AG04450 (cell line): ENCODE measurements at regions of chr16 and their contacts with region 1.

Region 1: GRCh38 chr16:14347706-14348105 is 276.6 kb downstream of the MRTFB start:
- DNase-seq: no peak
- H3K4me3 ChIP-seq: no peak overlapping the region
- H3K27ac ChIP-seq: no peak overlapping the region
- H3K27me3 ChIP-seq: no peaks in the 10 kb centered on the region
- CTCF ChIP-seq: no peak

Region 2: DNA sequence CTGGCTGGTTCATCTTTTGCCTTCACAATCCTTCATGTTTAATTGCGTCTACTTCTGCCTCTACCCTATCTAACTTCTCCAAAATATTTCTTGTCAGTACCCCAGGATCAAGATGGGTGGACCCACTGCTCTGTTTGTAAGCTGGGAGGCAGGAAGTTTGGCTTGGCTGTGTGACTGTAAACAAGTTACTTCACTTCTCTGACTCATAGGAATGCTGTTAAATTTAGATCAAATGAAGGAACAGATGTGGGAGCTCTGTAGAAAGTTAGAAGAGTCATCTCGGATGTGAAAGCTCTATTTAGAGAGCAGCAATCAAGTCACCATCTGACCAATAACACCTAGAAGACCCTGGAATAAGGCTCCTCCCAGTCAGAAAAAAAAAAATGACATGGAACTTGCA is 331.8 kb before region 1 on chr16:
- CTCF ChIA-PET with region 1: no interaction called
- POLR2A ChIA-PET with region 1: interaction called, 10 read pairs
- DNase-seq: peak; percentile 80
- H3K4me3 ChIP-seq: no peak overlapping the region
- H3K27ac ChIP-seq: peak overlapping the region; percentile 47
- H3K27me3 ChIP-seq: no peaks in the 10 kb centered on the region
- CTCF ChIP-seq: no peak

Region 3: DNA sequence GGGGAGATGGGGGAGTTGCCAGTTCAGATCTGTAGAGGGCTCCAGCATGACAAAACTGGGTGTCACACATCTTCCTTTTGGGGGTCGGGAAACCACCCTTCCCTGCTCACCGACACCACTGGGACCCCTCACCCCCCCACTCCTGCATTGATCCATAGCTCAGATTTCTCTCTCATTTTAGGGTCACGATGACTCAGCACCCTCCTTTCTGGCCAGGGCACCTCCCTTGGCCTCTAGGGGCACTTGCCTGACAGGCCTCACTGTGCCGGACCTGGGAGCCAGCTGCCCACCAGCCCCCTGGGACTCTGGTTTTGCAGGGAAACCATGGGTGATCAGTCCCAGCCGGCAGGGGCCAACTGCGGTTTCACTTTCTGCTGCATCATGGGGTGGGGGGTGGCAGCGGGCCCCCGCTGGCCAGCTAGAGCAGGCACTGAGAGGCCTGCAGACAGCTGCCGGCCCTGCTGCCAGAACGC is 37.2 kb before region 1 on chr16:
- CTCF ChIA-PET with region 1: no interaction called
- POLR2A ChIA-PET with region 1: no interaction called
- DNase-seq: no peak
- H3K4me3 ChIP-seq: peak overlapping the region; percentile 31
- H3K27ac ChIP-seq: peak overlapping the region; percentile 47
- H3K27me3 ChIP-seq: no peaks in the 10 kb centered on the region
- CTCF ChIP-seq: peak; percentile 27